OCI-LY7 (cell line): ENCODE measurements at regions of chr1 and their contacts with region 1.

Region 1: DNA sequence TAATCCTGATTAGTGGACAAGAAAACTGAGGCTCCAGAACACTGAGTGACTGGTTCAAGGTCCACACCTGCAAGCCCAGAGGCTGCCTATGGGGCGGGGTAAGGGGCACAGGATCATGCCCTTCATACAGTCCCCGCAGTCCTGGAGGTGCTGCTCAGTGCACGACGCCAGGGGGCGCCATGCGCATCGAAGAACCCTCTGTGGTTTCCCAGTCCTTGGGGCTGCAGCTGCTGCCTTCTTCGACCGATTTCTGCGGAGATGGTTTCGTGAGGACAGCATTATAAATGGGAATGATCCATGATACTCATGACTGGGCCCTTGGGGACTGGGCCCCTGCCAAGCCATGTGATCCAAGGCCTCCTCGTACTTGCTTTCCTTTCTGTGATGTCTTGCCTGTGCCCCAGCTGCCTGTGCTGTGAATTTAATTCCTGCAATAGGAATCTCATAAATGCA is 37.1 kb upstream of the ARHGEF10L start:
- DNase-seq: peak; percentile 75
- H3K4me3 ChIP-seq: no peak overlapping the region
- H3K27ac ChIP-seq: no peak overlapping the region
- H3K4me1 ChIP-seq: no peaks in the 10 kb centered on the region
- CTCF ChIP-seq: peak; percentile 89

Region 2: GRCh38 chr1:17513131-17513530 is 10.8 kb after region 1 on chr1:
- CTCF ChIA-PET with region 1: no interaction called
- POLR2A ChIA-PET with region 1: no interaction called
- intact Hi-C with region 1: no loop called
- DNase-seq: no peak
- H3K4me3 ChIP-seq: no peak overlapping the region
- H3K27ac ChIP-seq: no peak overlapping the region
- H3K4me1 ChIP-seq: no peaks in the 10 kb centered on the region
- CTCF ChIP-seq: no peak

Region 3: GRCh38 chr1:17540255-17541001 is 38.1 kb after region 1 on chr1:
- CTCF ChIA-PET with region 1: no interaction called
- POLR2A ChIA-PET with region 1: no interaction called
- intact Hi-C with region 1: loop called (anchors 1 kb)
- DNase-seq: no peak
- H3K4me3 ChIP-seq: no peak overlapping the region
- H3K27ac ChIP-seq: no peak overlapping the region
- H3K4me1 ChIP-seq: peaks cover 26% of the 10 kb centered on the region
- CTCF ChIP-seq: no peak

Region 4: DNA sequence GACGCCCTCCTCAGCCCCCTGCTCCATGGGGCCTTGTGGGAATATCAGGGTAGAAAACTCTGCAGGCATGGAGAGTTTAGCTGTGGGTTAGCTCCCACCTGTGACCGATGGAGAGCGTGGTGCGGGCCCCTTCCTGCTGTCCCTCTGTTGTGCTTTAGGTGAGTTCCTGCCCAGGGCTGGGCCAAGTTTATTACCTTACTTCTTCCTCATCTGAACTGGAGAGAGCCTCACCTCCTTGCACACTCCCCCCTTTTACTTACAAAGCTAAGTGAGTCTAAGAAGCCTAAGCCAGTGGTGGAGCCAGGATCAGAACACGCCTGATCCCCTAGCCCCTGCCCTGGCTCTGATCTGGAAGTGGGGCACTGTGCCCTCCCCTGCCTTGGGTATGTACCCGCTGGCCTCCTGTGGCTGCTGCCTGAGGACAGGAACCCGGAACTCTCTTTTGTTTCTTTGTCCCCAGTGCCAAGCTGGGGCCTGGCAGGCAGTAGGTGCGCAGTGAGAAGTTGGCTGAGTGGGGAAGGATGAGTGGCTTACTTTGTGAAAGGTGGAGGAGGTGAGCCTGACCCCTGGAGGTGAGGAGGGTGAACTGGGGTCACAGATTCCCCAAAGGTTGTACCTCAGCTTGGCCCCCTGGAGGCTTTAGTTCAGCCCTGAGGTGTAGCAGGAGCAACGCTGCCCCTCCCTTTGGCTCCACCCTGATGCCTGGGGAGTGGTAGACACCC is 70.1 kb after region 1 on chr1:
- CTCF ChIA-PET with region 1: no interaction called
- POLR2A ChIA-PET with region 1: no interaction called
- intact Hi-C with region 1: loop called (anchors 1 kb)
- DNase-seq: peak; percentile 54
- H3K4me3 ChIP-seq: no peak overlapping the region
- H3K27ac ChIP-seq: no peak overlapping the region
- H3K4me1 ChIP-seq: no peaks in the 10 kb centered on the region
- CTCF ChIP-seq: peak; percentile 69

Region 5: DNA sequence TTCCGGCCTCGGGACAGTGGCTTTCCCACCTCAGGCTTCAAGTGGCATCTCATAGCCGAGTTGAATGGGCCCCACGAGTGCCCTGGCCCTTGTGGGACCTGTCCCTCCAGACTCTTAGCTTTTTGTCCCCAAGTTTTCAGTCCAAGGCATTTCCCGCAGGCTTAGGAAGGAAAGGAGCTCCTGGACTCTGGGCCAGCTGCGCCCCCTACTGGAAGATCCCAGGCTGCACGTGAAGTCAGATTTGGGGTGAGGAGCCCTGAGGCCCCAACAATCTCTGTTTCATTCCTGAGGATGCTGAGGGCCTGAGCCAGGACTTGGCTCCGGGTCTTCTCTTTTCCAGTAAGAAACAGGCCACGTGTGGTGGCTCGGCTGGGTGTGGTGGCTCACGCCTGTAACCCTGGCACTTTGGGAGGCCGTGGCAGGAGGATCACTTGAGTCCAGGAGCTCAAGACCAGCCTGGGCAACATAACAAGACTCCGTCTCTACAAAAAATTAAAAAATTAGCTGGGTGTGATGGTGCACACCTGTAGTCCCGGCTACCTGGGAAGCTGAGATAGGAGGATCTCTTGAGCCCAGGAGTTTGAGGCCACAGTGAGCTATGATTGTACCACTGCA is 104.6 kb after region 1 on chr1:
- CTCF ChIA-PET with region 1: interaction called, 8 read pairs
- POLR2A ChIA-PET with region 1: interaction called, 3 read pairs
- intact Hi-C with region 1: loop called (anchors 1 kb)
- DNase-seq: peak; percentile 63
- H3K4me3 ChIP-seq: no peak overlapping the region
- H3K27ac ChIP-seq: no peak overlapping the region
- H3K4me1 ChIP-seq: no peaks in the 10 kb centered on the region
- CTCF ChIP-seq: peak; percentile 91